ENCODE measurements at regions of chr13 and their contacts with region 1.

Region 1: GRCh38 chr13:51995677-51996551 is 15.3 kb downstream of the ATP7B start:
- DNase-seq: no peak
- H3K4me3 ChIP-seq: no peak overlapping the region
- H3K4me3 Mint-ChIP-seq: no peak overlapping the region
- H3K27ac Mint-ChIP-seq: no peak overlapping the region
- H3K4me1 ChIP-seq: peaks cover 51% of the 10 kb centered on the region
- H3K4me1 Mint-ChIP-seq: peaks cover 44% of the 10 kb centered on the region
- H3K27me3 ChIP-seq: no peaks in the 10 kb centered on the region
- H3K27me3 Mint-ChIP-seq: no peaks in the 10 kb centered on the region
- CTCF ChIP-seq: no peak

Region 2: DNA sequence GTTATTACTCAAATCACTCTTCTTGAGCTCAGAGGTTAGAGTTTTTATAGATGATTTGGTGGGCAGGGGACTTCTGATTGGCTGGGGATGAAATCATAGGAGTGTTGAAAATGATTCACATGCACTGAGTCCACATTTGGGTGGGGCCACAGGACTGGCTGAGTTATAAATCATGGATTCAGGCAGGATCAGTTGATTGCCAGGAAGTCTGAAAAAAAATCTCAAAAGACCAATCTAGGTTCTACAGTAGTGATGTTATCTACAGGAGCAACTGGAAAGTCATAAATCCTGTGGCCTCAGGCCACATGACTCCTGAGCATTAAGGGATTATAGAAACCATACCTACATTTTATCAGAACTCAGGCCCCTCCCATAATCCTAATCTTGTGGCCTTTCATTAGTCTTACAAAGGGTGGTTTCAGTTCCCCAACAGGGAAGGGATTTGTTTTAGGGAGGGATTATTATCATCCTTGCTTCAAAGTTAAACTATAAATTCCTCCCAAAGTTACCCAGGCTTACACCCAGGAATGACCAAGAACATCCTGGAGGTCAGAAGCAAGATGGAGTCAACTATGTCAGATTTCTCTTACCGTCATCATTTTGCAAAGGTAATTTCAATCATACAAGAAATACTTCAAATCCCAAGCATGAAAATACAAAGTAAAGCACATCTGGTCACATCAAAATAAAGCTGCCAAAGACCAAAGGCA is 139.7 kb before region 1 on chr13:
- CTCF ChIA-PET with region 1: no interaction called
- POLR2A ChIA-PET with region 1: no interaction called
- intact Hi-C with region 1: loop called (anchors 5 kb)
- DNase-seq: peak; percentile 48 to 60
- H3K4me3 ChIP-seq: no peak overlapping the region
- H3K4me3 Mint-ChIP-seq: no peak overlapping the region
- H3K27ac Mint-ChIP-seq: peak overlapping the region; percentile 26
- H3K4me1 ChIP-seq: peaks cover 36% of the 10 kb centered on the region
- H3K4me1 Mint-ChIP-seq: peaks cover 39% of the 10 kb centered on the region
- H3K27me3 ChIP-seq: no peaks in the 10 kb centered on the region
- H3K27me3 Mint-ChIP-seq: no peaks in the 10 kb centered on the region
- CTCF ChIP-seq: no peak

Region 3: DNA sequence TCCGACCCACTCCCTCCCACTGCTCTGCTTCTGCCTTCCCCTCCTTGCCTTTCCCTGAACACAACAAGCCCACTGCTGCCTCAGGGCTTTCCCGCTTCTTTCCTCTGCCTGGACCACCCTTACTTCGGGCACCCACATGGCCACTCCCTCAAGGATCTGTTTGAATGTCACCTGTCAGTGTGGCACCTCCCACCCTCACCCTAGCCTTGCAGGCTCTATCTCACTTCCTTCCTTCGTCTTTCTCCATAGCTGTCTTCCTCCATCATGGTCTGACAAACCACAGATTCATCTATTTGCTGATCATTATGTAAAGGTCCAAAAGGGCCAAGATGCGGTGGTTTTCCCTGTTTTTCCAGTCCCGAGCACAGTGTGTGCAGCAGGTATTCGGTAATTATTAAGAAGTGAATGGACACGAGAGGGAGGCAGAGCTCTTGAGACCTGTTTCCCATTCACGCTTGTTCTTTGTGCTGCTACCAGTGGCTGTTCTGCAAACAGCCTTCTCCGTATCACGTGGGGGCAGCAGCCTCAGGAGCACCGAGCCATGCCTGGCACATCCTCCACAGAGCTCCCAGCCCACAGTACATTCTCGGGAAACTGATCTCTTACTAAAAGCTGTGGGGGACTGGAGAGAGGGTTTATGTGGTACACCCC is 83.9 kb before region 1 on chr13:
- CTCF ChIA-PET with region 1: no interaction called
- POLR2A ChIA-PET with region 1: no interaction called
- intact Hi-C with region 1: loop called (anchors 5 kb)
- DNase-seq: peak; percentile 69 to 75
- H3K4me3 ChIP-seq: no peak overlapping the region
- H3K4me3 Mint-ChIP-seq: peak overlapping the region; percentile 13
- H3K27ac Mint-ChIP-seq: peak overlapping the region; percentile 21
- H3K4me1 ChIP-seq: peaks cover 18% of the 10 kb centered on the region
- H3K4me1 Mint-ChIP-seq: peaks cover 13% of the 10 kb centered on the region
- H3K27me3 ChIP-seq: no peaks in the 10 kb centered on the region
- H3K27me3 Mint-ChIP-seq: no peaks in the 10 kb centered on the region
- CTCF ChIP-seq: peak in 1 of 2 experiments; percentile 50

Measured in Caco-2 (cell line).